ENCODE measurements at regions of chr20 and their contacts with region 1.

Region 1: DNA sequence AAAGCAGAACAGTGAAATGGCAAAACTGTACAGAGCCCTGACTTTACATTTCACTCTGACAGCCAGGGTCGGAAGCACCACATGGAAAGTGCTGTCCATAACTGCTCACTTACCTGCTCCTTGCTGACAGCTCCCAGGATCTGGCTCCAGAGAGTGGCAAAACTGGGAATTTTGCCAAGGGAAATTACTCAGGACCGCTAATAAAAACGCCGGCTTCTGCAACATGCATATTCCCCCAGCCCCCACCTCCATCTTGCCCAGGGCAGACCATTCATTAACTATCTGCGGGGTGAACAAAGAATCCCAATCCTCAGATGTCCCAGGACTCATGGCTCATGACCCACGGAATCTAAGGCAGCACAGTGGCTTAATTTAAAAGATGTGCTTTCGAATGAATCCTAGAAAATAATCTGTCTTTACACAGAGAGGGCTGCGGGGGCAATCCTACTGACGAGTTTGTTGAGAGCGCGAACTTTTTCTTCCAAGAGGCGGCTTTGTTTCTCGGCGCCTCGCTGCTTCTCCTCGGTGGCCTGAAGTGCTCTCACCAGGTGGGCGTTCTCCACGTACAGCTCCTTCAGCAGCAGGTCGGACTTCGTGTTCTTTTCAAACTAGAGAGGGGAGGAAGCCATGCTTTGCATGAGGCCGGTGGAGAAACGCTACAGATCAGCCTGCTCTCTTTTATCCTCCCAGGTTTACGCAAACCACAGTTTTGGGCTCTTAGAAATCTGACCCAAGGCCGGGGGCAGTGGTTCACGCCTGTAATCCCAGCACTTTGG is 45.8 kb downstream of the GINS1 start:
- DNase-seq: peak; percentile 73
- H3K27ac ChIP-seq: peak overlapping the region; percentile 11; the same call in 1 of the 2 replicates
- CTCF ChIP-seq: no peak

Region 2: DNA sequence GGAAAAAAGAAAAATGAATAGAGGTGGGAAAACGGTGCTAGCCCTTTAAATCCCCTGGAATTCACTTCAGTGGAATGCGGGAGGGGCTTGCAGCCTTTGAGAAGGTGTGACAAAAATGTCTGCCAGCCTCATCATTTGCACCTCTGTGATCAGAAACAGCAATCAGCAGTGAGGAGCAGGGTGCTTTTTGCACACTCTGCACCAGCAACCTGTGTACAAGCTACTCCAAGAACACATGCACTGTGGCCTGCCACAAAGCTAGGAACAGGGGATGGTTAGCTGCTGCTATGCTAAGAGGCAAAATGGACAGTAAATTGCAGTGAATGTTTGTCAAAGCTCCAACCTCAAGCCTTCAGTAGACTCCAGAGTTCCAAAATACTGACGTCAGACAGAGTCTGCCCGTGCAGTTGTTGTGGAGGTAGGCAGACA is 16.1 kb before region 1 on chr20:
- CTCF ChIA-PET with region 1: no interaction called
- POLR2A ChIA-PET with region 1: interaction called, 13 read pairs
- DNase-seq: peak; percentile 13
- H3K27ac ChIP-seq: no peak overlapping the region
- CTCF ChIP-seq: no peak